T-cell (primary cell): ENCODE measurements at regions of chr14 and their contacts with region 1.

Region 1: GRCh38 chr14:96796851-96797581 is at the start of gene VRK1:
- DNase-seq: peak; percentile 86 to 96 (median 93)
- ATAC-seq: peak; percentile 98 to 99 (median 99)
- H3K4me3 ChIP-seq: peak within 1 kb of the TSS; percentile 67 to 84
- H3K4me3 Mint-ChIP-seq: peak within 1 kb of the TSS; percentile 84 to 89 (median 88)
- H3K27ac ChIP-seq: peak within 1 kb of the TSS; percentile 58
- H3K27ac Mint-ChIP-seq: peak within 1 kb of the TSS; percentile 73 to 74
- H3K4me1 ChIP-seq: peaks cover 5 to 10% of the 10 kb centered on the region in 2 experiments
- H3K4me1 Mint-ChIP-seq: peaks cover 26 to 30% (median 26%) of the 10 kb centered on the region in 3 donors
- H3K27me3 ChIP-seq: peaks cover 0 to 4% of the 10 kb centered on the region in 2 experiments
- H3K27me3 Mint-ChIP-seq: peaks cover 0 to 15% of the 10 kb centered on the region in 2 donors
- total RNA-seq, gene VRK1: 24.4 to 34.5 (median 29.4) TPM

Region 2: DNA sequence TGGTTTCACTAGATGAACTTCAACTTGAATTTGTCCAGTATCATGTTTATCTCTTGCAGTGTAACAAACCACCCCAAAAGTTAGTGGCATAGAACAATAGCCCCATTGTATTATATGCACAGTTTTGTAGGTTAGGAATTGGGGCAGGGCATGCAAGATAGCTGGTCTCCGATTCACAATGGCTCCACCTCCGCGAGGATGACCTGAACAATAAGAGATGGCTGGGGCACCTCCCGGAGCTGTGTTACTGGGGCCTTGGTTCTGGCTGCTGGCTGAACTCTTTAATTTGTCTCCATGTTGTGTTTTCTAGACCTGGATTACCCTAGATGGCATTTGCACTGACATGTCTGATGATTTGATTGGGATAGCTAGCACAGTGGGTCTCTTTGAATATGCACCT is 20.2 kb before region 1 on chr14:
- CTCF ChIA-PET with region 1: no interaction called
- POLR2A ChIA-PET with region 1: no interaction called
- DNase-seq: no peak
- ATAC-seq: no peak
- H3K4me3 ChIP-seq: no peak overlapping the region
- H3K4me3 Mint-ChIP-seq: no peak overlapping the region
- H3K27ac ChIP-seq: no peak overlapping the region
- H3K27ac Mint-ChIP-seq: no peak overlapping the region
- H3K4me1 ChIP-seq: no peaks in the 10 kb centered on the region
- H3K4me1 Mint-ChIP-seq: no peaks in the 10 kb centered on the region
- H3K27me3 ChIP-seq: peaks cover 0 to 16% of the 10 kb centered on the region in 2 experiments
- H3K27me3 Mint-ChIP-seq: peaks cover 5 to 25% of the 10 kb centered on the region in 2 donors

Region 3: DNA sequence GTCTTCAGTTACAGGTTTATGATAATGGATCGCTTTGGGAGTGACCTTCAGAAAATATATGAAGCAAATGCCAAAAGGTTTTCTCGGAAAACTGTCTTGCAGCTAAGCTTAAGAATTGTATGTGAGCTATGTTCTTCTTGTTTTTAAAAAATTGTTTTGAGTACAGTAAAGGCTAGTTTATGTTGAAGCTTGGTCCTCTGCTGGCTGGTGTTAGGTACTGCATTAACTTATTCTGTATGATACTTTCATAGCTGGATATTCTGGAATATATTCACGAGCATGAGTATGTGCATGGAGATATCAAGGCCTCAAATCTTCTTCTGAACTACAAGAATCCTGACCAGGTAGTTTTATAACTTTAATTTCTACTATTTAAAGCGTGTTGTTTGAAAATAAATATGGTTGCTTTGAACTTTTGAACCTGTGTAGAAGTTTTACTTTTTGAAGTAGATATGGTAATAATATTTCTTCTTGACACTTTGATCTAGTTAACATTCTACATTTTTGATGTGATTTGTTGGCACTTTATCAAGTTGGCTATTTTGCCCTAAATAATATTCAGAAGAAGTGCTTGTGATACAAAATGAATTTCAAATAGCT is 55.9 kb after region 1 on chr14:
- CTCF ChIA-PET with region 1: interaction called in 1 of 2 experiments, 11 read pairs
- POLR2A ChIA-PET with region 1: no interaction called
- DNase-seq: peak in 7 of 35 experiments; percentile 1 to 42 (median 10)
- ATAC-seq: peak in 1 of 4 experiments; percentile 45
- H3K4me3 ChIP-seq: no peak overlapping the region
- H3K4me3 Mint-ChIP-seq: no peak overlapping the region
- H3K27ac ChIP-seq: no peak overlapping the region
- H3K27ac Mint-ChIP-seq: no peak overlapping the region
- H3K4me1 ChIP-seq: peaks cover 0 to 2% of the 10 kb centered on the region in 2 experiments
- H3K4me1 Mint-ChIP-seq: peaks cover 0 to 14% (median 9%) of the 10 kb centered on the region in 3 donors
- H3K27me3 ChIP-seq: no peaks in the 10 kb centered on the region
- H3K27me3 Mint-ChIP-seq: no peaks in the 10 kb centered on the region

Region 4: DNA sequence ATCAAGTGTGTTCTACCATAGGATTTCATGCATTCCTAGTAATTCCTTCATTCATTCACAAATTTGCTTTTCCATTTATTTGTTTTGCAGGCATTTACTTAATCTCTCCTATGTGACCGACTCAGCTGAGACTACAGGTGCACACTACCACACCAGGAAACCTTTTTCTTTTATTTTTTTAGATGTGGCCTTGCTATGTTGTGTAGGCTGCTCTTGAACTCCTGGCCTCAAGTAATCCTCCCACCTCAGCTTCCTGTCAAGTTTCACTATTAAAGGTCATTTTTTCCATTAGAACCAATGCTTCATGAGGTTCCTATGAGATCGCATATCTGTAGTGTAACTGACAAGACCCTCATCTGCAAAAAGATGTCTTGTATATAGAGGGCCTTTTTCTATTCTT is 1218.9 kb after region 1 on chr14:
- CTCF ChIA-PET with region 1: no interaction called
- POLR2A ChIA-PET with region 1: interaction called in 1 of 2 experiments, 10 read pairs
- DNase-seq: no peak
- ATAC-seq: peak in 3 of 4 experiments; percentile 38 to 64 (median 56)
- H3K4me3 ChIP-seq: no peak overlapping the region
- H3K4me3 Mint-ChIP-seq: peak overlapping the region in 1 of 3 donors; percentile 45
- H3K27ac ChIP-seq: no peak overlapping the region
- H3K27ac Mint-ChIP-seq: peak overlapping the region; percentile 83 to 86
- H3K4me1 ChIP-seq: peaks cover 46 to 53% of the 10 kb centered on the region in 2 experiments
- H3K4me1 Mint-ChIP-seq: peaks cover 72 to 88% (median 73%) of the 10 kb centered on the region in 3 donors
- H3K27me3 ChIP-seq: no peaks in the 10 kb centered on the region
- H3K27me3 Mint-ChIP-seq: no peaks in the 10 kb centered on the region